HCT116 (cell line): ENCODE measurements at regions of chr12 and their contacts with region 1.

Region 1: DNA sequence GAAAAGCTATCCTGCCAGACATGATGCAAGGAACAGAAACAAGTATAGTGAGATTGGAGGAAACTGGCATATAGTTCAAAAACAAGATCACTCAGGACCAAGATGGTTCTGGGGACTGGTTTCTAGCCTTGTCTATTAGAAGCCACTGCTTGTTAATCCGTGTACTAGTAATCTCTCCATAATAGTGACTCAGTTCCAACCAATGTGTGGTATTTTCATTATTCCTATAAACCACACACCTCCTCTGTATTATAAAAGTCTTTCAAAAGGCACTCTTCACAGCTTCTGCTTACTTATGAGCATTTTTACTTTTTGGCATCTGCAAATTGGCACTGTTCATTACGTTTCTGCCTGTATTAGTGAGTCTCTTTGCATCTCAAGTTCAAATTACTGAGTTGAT is 140.3 kb downstream of the SLC6A15 start:
- DNase-seq: no peak
- ATAC-seq: no peak
- H3K4me3 ChIP-seq: no peak overlapping the region
- H3K27ac ChIP-seq: no peak overlapping the region
- H3K4me1 ChIP-seq: no peaks in the 10 kb centered on the region
- H3K27me3 ChIP-seq: no peaks in the 10 kb centered on the region
- CTCF ChIP-seq: no peak
- POLR2A ChIP-seq: no peak
- RAD21 ChIP-seq: no peak

Region 2: GRCh38 chr12:84676787-84677186 is 95.5 kb before region 1 on chr12:
- CTCF ChIA-PET with region 1: no interaction called
- POLR2A ChIA-PET with region 1: no interaction called
- RAD21 ChIA-PET with region 1: no interaction called
- intact Hi-C with region 1: loop called (anchors 1 kb)
- DNase-seq: no peak
- ATAC-seq: no peak
- H3K4me3 ChIP-seq: no peak overlapping the region
- H3K27ac ChIP-seq: no peak overlapping the region
- H3K4me1 ChIP-seq: no peaks in the 10 kb centered on the region
- H3K27me3 ChIP-seq: no peaks in the 10 kb centered on the region
- CTCF ChIP-seq: no peak
- POLR2A ChIP-seq: no peak
- RAD21 ChIP-seq: no peak